ENCODE measurements at regions of chr3 and their contacts with region 1.

Region 1: GRCh38 chr3:25594007-25594502 is 70.7 kb downstream of the TOP2B start:
- DNase-seq: peak; percentile 73
- H3K4me3 ChIP-seq: no peak overlapping the region
- CTCF ChIP-seq: peak; percentile 29

Region 2: GRCh38 chr3:24963762-24964625 is 630.1 kb before region 1 on chr3:
- CTCF ChIA-PET with region 1: interaction called, 46 read pairs
- POLR2A ChIA-PET with region 1: no interaction called
- DNase-seq: no peak
- H3K4me3 ChIP-seq: no peak overlapping the region
- CTCF ChIP-seq: peak; percentile 49

Region 3: GRCh38 chr3:25038922-25039321 is 555.1 kb before region 1 on chr3:
- CTCF ChIA-PET with region 1: interaction called, 60 read pairs
- POLR2A ChIA-PET with region 1: no interaction called
- DNase-seq: no peak
- H3K4me3 ChIP-seq: no peak overlapping the region
- CTCF ChIP-seq: no peak

Region 4: DNA sequence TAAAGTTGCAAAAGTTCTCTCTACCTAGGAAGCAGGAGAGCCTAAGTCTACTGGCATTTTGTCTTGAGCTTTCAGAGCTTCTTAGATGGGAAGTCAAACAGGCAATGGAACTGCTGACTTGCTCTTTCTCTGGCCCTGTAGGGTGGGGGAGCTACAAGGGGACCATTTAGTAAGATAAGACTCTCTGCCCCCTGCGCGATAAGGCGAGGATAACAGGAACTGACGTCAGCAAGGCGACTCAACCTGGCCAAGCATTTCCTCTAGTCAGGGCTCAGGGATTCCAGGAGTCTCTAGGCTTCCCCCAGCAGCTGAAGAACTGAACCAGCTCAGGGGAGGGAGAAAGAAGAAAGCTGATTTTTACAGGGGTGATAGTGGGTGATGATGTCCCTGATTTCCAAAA is 160.2 kb before region 1 on chr3:
- CTCF ChIA-PET with region 1: interaction called, 54 read pairs
- POLR2A ChIA-PET with region 1: no interaction called
- DNase-seq: no peak
- H3K4me3 ChIP-seq: no peak overlapping the region; the same call in 1 of the 2 replicates
- CTCF ChIP-seq: no peak

Region 5: DNA sequence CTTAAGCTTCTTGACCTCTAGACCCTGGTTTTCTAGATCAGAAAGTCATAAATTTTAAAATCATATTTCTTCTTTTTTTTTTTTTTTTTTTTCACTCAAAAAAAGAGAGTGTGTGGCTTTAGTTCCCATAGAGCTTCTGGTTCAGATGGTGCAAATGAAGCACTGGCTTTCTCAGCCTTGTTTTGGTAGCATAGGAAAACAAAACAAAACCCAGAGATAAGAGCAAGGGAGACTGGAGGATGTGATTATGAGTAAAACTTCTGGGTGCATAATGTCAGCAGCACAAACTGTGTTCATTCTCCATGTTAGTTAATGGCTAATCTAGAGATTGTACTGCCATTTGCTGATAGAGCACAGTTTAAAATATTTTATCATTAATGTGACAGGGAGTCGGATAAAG is 110.6 kb before region 1 on chr3:
- CTCF ChIA-PET with region 1: interaction called, 13 read pairs
- POLR2A ChIA-PET with region 1: no interaction called
- DNase-seq: no peak
- H3K4me3 ChIP-seq: no peak overlapping the region
- CTCF ChIP-seq: no peak

Region 6: DNA sequence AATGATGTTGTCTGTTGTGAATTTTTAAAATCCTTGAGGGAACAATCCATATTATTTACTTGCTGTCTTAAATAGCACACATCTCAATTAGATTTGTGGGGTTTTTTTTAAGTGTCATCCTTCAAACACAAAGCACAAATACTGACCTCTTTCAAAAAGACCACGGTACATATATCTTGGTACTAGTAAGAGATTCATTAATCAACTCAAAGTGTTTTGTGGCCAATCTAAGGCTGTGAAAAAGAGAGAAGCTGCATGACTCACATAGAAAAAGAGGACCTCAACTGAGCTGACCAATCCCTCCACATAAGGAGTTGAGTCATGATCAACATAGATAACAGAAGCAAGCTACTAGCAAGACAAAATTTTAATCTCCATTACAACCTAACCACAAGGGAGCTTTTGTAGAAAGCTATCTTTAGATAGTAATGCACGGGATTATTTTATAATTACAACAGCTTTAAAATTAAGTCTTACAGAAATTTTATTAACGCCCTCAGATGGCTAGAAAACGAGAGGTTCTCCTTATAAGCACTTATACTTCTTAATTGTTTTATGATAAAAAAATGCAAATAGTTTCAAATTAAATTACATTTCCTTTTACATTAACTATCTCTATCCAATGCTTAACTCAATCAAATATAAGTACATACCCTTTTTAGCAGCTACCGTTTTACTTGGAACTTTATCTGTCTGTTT is 10.2 kb after region 1 on chr3:
- CTCF ChIA-PET with region 1: interaction called, 42 read pairs
- POLR2A ChIA-PET with region 1: interaction called, 3 read pairs
- DNase-seq: peak; percentile 75
- H3K4me3 ChIP-seq: no peak overlapping the region
- CTCF ChIP-seq: no peak

Region 7: GRCh38 chr3:25775936-25776335 is 181.9 kb after region 1 on chr3:
- CTCF ChIA-PET with region 1: no interaction called
- POLR2A ChIA-PET with region 1: no interaction called
- DNase-seq: no peak
- H3K4me3 ChIP-seq: no peak overlapping the region
- CTCF ChIP-seq: no peak

Measured in AG04449 (cell line).